PC-9 (cell line): ENCODE measurements at regions of chr19 and their contacts with region 1.

Region 1: DNA sequence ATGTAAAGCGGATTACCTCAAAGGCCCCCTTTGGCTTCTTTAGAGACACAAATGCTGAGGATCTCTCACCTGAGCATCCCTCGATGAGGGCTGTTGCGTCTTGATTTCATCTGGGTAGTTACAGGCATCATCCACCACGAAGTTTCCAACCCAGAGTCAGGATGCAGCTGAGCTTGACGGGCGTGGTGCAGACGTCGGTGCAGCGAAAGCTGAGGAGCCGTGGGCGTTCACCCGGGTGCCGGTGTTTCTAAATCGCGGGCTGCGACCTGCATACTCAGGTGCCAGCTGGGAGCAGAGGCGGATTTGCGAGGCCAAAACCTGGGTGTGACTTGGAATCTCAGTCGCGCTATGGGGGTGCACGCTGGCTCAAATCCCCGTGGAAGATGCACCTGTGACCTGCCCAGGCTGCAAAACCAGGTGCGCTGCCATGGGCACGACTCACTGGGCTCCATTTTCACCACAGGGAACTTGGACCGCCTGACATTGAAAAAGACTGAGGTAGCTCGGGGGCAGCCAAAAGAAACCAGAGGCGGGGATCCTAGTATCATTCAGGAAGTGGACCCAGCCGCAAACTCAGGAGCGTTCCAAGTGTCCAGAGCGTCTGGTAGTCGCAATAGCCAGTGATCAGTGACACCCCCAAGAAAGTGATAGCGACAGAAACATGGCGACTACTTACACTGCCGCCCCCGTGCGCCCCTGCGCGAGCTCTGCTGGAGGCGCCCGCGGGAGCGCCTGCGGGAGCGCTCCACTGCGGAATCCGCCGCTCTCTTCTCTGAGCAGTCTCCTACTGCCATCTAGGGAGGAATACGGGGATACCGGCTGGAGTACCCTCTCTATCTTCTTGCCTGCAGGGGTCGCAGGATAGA is 36.4 kb upstream of the IGFL4 start:
- DNase-seq: peak; percentile 73 to 74
- H3K4me3 ChIP-seq: peak overlapping the region; percentile 55
- H3K27ac ChIP-seq: no peak overlapping the region
- H3K4me1 ChIP-seq: peaks cover 38% of the 10 kb centered on the region
- H3K27me3 ChIP-seq: no peaks in the 10 kb centered on the region
- CTCF ChIP-seq: peak; percentile 99

Region 2: DNA sequence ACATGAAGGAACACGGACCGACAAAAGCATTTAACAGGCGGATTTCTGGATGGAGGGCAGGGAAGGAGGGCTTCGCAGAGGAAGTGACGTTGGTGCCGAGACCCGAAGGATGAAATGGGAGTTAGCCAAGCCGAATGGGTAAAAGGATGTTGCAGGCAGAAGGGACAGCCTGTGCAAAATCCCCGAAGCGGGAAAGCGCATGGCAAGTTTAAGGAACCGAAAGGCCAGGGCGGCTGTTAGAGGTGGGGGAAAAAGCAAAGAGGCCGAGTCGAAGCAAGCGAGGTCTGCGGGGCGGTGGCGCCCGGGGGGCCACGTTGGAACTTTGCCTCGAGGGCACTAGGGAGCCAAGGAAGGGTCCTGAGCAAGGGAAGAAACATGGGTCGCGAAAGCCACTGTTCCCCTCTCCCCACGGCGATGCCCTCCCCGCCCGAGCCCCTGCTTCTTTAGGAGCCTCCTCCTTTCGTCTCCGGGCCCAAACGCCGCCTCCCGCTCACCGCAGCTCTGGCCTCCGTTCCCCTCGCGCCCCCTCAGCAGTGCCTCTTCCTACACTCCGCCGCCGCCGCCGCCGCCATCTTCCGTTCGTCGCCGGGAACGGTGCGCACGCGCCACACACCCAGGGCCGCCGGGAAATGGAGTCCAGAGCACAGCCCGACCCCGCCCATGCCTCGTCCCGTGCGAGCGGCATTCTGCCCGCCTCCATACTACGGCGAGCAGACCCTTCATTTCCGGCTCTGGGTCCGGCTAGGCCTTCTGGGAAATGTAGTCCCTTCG is 214.4 kb before region 1 on chr19 and contains the start of gene SYMPK:
- CTCF ChIA-PET with region 1: interaction called, 3 read pairs
- POLR2A ChIA-PET with region 1: no interaction called
- intact Hi-C with region 1: loop called (anchors 10 kb)
- DNase-seq: peak; percentile 97
- H3K4me3 ChIP-seq: peak within 1 kb of the TSS; percentile 67
- H3K27ac ChIP-seq: peak within 1 kb of the TSS; percentile 30
- H3K4me1 ChIP-seq: peaks cover 15% of the 10 kb centered on the region
- H3K27me3 ChIP-seq: peaks cover 41% of the 10 kb centered on the region
- CTCF ChIP-seq: no peak; the same call in 1 of the 2 replicates
- total RNA-seq, gene SYMPK: 85.5 and 121 TPM in 2 replicates

Region 3: GRCh38 chr19:46090444-46090843 is 13.3 kb after region 1 on chr19:
- CTCF ChIA-PET with region 1: no interaction called
- POLR2A ChIA-PET with region 1: no interaction called
- intact Hi-C with region 1: no loop called
- DNase-seq: no peak
- H3K4me3 ChIP-seq: no peak overlapping the region
- H3K27ac ChIP-seq: no peak overlapping the region
- H3K4me1 ChIP-seq: no peaks in the 10 kb centered on the region
- H3K27me3 ChIP-seq: no peaks in the 10 kb centered on the region
- CTCF ChIP-seq: no peak

Region 4: GRCh38 chr19:46133101-46133682 is 56.0 kb after region 1 on chr19:
- CTCF ChIA-PET with region 1: no interaction called
- POLR2A ChIA-PET with region 1: no interaction called
- intact Hi-C with region 1: loop called (anchors 2 kb)
- DNase-seq: peak; percentile 70 to 85
- H3K4me3 ChIP-seq: no peak overlapping the region
- H3K27ac ChIP-seq: no peak overlapping the region
- H3K4me1 ChIP-seq: peaks cover 13% of the 10 kb centered on the region
- H3K27me3 ChIP-seq: no peaks in the 10 kb centered on the region
- CTCF ChIP-seq: no peak

Region 5: DNA sequence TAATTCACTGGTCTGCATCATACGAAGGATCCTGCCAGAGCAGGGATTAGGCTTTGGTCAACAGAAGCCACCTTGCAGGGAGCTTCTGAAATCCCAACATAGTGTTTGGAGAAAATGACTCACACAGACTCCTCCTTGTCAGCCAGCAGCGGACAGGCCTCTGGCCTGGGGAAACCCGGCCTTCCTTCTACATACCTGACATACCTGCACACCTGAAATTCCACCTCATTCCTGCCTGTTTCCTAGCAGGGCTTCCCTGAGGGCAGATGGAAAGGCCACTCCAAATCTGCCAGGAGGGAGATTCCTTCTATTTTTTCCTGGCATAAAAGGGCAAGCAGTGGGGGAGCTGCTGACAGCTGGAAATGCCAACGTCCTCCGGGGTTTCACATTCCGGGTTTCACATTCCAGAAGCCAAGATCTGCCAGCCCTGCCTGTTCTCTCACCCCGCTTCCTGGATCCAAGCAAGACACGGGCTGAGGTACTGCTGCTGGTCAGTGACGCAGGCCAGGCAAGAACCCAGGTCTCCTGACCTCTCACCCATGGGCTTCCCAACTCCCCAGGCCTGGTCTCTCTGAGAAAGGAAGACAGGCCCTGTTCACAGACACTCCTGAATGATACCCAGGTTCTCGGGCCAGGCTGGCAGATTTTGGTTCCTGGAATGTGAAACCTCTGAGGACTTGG is 134.2 kb after region 1 on chr19:
- CTCF ChIA-PET with region 1: interaction called, 3 read pairs
- POLR2A ChIA-PET with region 1: interaction called, 13 read pairs
- intact Hi-C with region 1: no loop called
- DNase-seq: peak; percentile 92 to 99
- H3K4me3 ChIP-seq: peak overlapping the region; percentile 2; the same call in 1 of the 2 replicates
- H3K27ac ChIP-seq: peak overlapping the region; percentile 93
- H3K4me1 ChIP-seq: peaks cover 70% of the 10 kb centered on the region
- H3K27me3 ChIP-seq: no peaks in the 10 kb centered on the region
- CTCF ChIP-seq: no peak

Region 6: GRCh38 chr19:46404055-46404752 is 327.0 kb after region 1 on chr19:
- CTCF ChIA-PET with region 1: no interaction called
- POLR2A ChIA-PET with region 1: interaction called, 13 read pairs
- intact Hi-C with region 1: no loop called
- DNase-seq: no peak
- H3K4me3 ChIP-seq: no peak overlapping the region
- H3K27ac ChIP-seq: no peak overlapping the region
- H3K4me1 ChIP-seq: no peaks in the 10 kb centered on the region
- H3K27me3 ChIP-seq: peaks cover 47% of the 10 kb centered on the region
- CTCF ChIP-seq: no peak